Naive thymus-derived CD4-positive, alpha-beta T cell (primary cell): ENCODE measurements at regions of chr2 and their contacts with region 1.

Region 1: DNA sequence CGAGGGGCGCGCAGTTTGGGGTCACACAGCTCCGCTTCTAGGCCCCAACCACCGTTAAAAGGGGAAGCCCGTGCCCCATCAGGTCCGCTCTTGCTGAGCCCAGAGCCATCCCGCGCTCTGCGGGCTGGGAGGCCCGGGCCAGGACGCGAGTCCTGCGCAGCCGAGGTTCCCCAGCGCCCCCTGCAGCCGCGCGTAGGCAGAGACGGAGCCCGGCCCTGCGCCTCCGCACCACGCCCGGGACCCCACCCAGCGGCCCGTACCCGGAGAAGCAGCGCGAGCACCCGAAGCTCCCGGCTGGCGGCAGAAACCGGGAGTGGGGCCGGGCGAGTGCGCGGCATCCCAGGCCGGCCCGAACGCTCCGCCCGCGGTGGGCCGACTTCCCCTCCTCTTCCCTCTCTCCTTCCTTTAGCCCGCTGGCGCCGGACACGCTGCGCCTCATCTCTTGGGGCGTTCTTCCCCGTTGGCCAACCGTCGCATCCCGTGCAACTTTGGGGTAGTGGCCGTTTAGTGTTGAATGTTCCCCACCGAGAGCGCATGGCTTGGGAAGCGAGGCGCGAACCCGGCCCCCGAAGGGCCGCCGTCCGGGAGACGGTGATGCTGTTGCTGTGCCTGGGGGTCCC is at the start of gene ITGA4:
- DNase-seq: peak; percentile 77 to 89 (median 83)
- ATAC-seq: peak; percentile 92
- H3K4me3 ChIP-seq: peak within 1 kb of the TSS; percentile 91
- H3K4me3 Mint-ChIP-seq: peak within 1 kb of the TSS; percentile 89 to 99 (median 95)
- H3K27ac ChIP-seq: peak within 1 kb of the TSS; percentile 82
- H3K27ac Mint-ChIP-seq: peak within 1 kb of the TSS; percentile 81 to 98 (median 95)
- H3K4me1 ChIP-seq: peaks cover 13 to 24% of the 10 kb centered on the region in 2 donors
- H3K4me1 Mint-ChIP-seq: peaks cover 34 to 65% (median 54%) of the 10 kb centered on the region in 7 donors
- H3K27me3 ChIP-seq: no peaks in the 10 kb centered on the region
- H3K27me3 Mint-ChIP-seq: no peaks in the 10 kb centered on the region
- total RNA-seq, gene ITGA4: 135 to 212 (median 159) TPM

Region 2: GRCh38 chr2:181077128-181077709 is 380.0 kb before region 1 on chr2:
- CTCF ChIA-PET with region 1: no interaction called
- POLR2A ChIA-PET with region 1: no interaction called
- intact Hi-C with region 1: loop called (anchors 1 kb)
- DNase-seq: peak in 7 of 9 donors; percentile 49 to 76 (median 64)
- ATAC-seq: peak; percentile 90
- H3K4me3 ChIP-seq: no peak overlapping the region
- H3K4me3 Mint-ChIP-seq: no peak overlapping the region
- H3K27ac ChIP-seq: no peak overlapping the region
- H3K27ac Mint-ChIP-seq: no peak overlapping the region
- H3K4me1 ChIP-seq: no peaks in the 10 kb centered on the region
- H3K4me1 Mint-ChIP-seq: peaks cover 0 to 11% (median 0%) of the 10 kb centered on the region in 7 donors
- H3K27me3 ChIP-seq: no peaks in the 10 kb centered on the region
- H3K27me3 Mint-ChIP-seq: peaks cover 0 to 14% (median 0%) of the 10 kb centered on the region in 5 donors

Region 3: GRCh38 chr2:181178823-181179412 is 278.3 kb before region 1 on chr2:
- CTCF ChIA-PET with region 1: no interaction called
- POLR2A ChIA-PET with region 1: interaction called, 3 read pairs
- intact Hi-C with region 1: loop called (anchors 1 to 2 kb)
- DNase-seq: peak in 6 of 9 donors; percentile 14 to 34 (median 30)
- ATAC-seq: peak; percentile 76
- H3K4me3 ChIP-seq: no peak overlapping the region
- H3K4me3 Mint-ChIP-seq: peak overlapping the region in 2 of 10 donors; percentile 19 to 25
- H3K27ac ChIP-seq: no peak overlapping the region
- H3K27ac Mint-ChIP-seq: peak overlapping the region in 8 of 9 donors; percentile 1 to 65 (median 44)
- H3K4me1 ChIP-seq: peaks cover 15 to 16% of the 10 kb centered on the region in 2 donors
- H3K4me1 Mint-ChIP-seq: peaks cover 7 to 58% (median 45%) of the 10 kb centered on the region in 7 donors
- H3K27me3 ChIP-seq: no peaks in the 10 kb centered on the region
- H3K27me3 Mint-ChIP-seq: no peaks in the 10 kb centered on the region

Region 4: DNA sequence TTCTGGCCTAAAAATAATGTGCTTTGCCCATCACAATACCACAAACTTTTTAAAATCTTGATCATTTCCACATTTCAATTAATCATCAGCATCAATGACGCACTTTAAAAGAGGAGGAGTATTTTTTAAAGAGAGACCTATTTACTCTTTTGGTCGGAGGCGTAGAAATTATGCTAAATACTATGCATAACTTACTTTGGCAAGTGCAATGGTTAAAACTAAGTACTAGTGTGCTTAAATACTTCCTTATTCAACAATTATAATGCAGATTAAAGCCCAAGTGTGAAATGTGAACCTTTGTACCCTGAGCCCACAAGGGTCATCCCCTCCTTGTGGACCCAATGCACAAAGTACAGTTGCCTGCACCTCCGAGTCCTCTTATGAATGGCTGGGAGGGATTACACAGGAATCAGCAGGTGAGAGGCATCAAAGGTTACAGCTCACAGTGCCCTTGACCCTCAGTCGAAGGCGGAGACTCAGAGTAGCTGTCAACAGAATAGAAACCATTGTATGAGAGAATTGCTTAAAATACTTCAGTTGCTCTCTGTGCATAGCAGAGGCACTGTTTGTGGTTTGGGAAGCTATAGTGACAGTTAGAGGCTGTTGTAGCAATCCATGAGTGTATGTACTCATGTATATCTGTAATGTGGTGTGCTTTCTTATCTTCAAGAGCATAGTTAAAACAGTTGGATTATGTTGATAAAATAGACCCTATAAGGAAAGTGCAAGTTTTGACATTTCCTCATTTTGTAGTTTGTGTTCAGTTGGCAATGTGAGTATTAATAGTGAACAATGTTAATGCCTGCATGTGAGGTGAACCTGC is 151.7 kb before region 1 on chr2:
- CTCF ChIA-PET with region 1: interaction called, 21 read pairs
- POLR2A ChIA-PET with region 1: interaction called, 69 read pairs
- intact Hi-C with region 1: loop called (anchors 1 kb)
- DNase-seq: peak in 5 of 9 donors; percentile 47 to 61 (median 54)
- ATAC-seq: peak; percentile 77
- H3K4me3 ChIP-seq: peak overlapping the region; percentile 14
- H3K4me3 Mint-ChIP-seq: peak overlapping the region; percentile 71 to 94 (median 82)
- H3K27ac ChIP-seq: peak overlapping the region; percentile 84
- H3K27ac Mint-ChIP-seq: peak overlapping the region; percentile 90 to 100 (median 95)
- H3K4me1 ChIP-seq: peaks cover 66 to 73% of the 10 kb centered on the region in 2 donors
- H3K4me1 Mint-ChIP-seq: peaks cover 49 to 90% (median 84%) of the 10 kb centered on the region in 7 donors
- H3K27me3 ChIP-seq: no peaks in the 10 kb centered on the region
- H3K27me3 Mint-ChIP-seq: no peaks in the 10 kb centered on the region

Region 5: DNA sequence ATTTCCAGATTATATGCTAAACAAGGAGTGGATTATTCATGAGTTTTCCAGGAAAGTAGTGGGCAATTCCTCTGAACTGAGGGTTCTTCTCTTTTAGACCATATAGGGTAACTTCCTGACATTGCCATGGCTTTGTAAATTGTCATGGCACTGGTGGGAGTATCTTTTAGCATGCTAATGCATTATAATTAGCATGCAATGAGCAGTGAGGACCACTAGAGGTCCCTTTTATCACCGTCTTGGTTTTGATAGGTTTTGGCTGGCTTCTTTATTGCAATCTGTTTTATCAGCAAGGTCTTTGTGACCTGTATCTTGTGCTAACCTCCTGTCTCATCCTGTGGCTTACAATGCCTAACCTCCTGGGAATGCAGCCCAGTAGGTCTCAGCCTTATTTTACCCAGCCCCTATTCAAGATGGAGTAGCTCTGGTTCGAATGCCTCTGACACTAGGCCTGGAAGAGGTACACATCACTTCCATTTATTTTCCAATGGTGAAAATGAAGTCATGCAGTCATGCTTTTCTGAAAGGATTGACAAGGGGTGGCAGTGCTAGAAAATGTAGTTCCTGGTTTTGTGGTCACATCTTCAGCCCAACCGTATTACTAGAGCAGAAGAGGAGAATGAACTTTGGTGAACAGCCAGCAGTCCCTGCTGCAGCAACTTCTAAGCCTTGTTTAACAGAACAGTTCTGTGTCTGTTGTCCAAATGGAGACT is 26.7 kb before region 1 on chr2:
- CTCF ChIA-PET with region 1: interaction called, 5 read pairs
- POLR2A ChIA-PET with region 1: interaction called, 3 read pairs
- intact Hi-C with region 1: loop called (anchors 1 to 2 kb)
- DNase-seq: peak in 6 of 9 donors; percentile 11 to 45 (median 29)
- ATAC-seq: peak; percentile 70
- H3K4me3 ChIP-seq: no peak overlapping the region
- H3K4me3 Mint-ChIP-seq: peak overlapping the region in 1 of 10 donors; percentile 15
- H3K27ac ChIP-seq: no peak overlapping the region
- H3K27ac Mint-ChIP-seq: peak overlapping the region in 6 of 9 donors; percentile 18 to 73 (median 50)
- H3K4me1 ChIP-seq: peaks cover 0 to 12% of the 10 kb centered on the region in 2 donors
- H3K4me1 Mint-ChIP-seq: peaks cover 5 to 20% (median 8%) of the 10 kb centered on the region in 7 donors
- H3K27me3 ChIP-seq: no peaks in the 10 kb centered on the region
- H3K27me3 Mint-ChIP-seq: no peaks in the 10 kb centered on the region

Region 6: DNA sequence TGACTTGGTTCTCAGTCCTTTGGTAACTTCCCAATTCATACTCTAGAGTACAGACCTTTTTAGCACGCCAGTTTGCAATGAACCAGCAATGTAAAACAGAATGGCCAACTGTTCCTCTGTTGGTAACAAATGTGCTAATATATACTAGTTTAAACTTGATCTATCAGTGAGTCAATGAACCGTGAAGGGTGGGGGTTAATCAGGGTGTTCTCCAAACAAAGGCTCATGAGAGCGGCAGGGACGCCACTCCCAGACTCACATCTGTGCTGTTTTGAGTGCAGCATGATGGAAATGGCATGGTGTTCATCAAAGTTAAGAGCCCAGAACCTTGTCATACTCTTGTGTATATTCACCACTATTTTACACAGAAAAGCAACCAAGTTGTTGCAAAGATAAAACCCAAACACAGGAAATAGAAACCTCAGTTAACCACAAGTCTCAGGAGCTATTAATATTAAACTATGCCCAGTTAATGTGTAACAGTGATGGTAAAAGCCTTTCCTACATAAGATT is 129.4 kb after region 1 on chr2:
- CTCF ChIA-PET with region 1: no interaction called
- POLR2A ChIA-PET with region 1: no interaction called
- intact Hi-C with region 1: no loop called
- DNase-seq: no peak
- ATAC-seq: no peak
- H3K4me3 ChIP-seq: no peak overlapping the region
- H3K4me3 Mint-ChIP-seq: no peak overlapping the region
- H3K27ac ChIP-seq: no peak overlapping the region
- H3K27ac Mint-ChIP-seq: peak overlapping the region in 1 of 9 donors; percentile 44
- H3K4me1 ChIP-seq: peaks cover 0 to 6% of the 10 kb centered on the region in 2 donors
- H3K4me1 Mint-ChIP-seq: peaks cover 9 to 17% (median 14%) of the 10 kb centered on the region in 7 donors
- H3K27me3 ChIP-seq: no peaks in the 10 kb centered on the region
- H3K27me3 Mint-ChIP-seq: peaks cover 4 to 34% (median 13%) of the 10 kb centered on the region in 5 donors

Region 7: GRCh38 chr2:181697571-181697970 is 240.3 kb after region 1 on chr2:
- CTCF ChIA-PET with region 1: no interaction called
- POLR2A ChIA-PET with region 1: no interaction called
- intact Hi-C with region 1: no loop called
- DNase-seq: no peak
- ATAC-seq: peak; percentile 38
- H3K4me3 ChIP-seq: no peak overlapping the region
- H3K4me3 Mint-ChIP-seq: no peak overlapping the region
- H3K27ac ChIP-seq: no peak overlapping the region
- H3K27ac Mint-ChIP-seq: no peak overlapping the region
- H3K4me1 ChIP-seq: no peaks in the 10 kb centered on the region
- H3K4me1 Mint-ChIP-seq: no peaks in the 10 kb centered on the region
- H3K27me3 ChIP-seq: no peaks in the 10 kb centered on the region
- H3K27me3 Mint-ChIP-seq: peaks cover 20 to 35% (median 24%) of the 10 kb centered on the region in 5 donors

Region 8: DNA sequence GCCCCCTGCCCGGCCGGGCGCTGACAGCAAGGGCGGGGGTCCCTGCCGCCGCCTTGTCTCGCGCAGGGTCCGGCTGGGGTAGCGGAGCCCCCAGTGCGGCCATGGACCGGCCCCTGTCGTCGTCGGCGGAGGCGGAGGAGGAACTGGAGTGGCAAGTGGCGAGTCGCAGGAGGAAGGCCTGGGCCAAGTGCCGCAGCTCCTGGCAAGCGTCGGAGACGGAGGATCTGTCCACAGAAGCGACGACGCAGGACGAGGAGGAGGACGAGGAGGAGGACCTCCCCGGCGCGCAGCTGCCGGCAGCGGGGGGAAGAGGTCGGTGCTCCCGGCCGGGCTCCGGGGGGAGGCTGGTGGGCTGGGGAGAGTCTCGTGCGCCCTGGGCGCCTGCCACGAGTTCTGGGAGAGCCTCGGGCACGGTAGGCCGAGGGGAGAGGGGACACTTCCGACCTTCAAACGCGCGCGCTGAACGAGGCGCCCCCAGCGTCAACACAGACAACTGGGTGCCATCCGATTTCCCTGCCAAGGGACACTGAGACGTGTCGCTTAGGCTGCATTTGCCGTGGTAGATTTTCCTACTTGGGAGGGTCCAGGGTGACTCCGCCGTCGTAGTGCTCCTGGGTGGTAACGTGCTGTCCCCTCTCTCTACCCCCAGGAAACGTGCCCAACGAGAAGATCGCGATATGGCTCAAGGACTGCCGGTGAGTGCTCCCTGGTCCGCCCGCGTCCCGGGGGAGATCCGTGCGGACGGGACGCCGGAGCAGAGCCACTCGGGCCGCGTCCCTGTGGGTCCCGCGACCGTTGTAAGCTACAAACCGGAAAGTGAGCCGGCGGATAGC is 435.0 kb after region 1 on chr2:
- CTCF ChIA-PET with region 1: no interaction called
- POLR2A ChIA-PET with region 1: interaction called, 3 read pairs
- intact Hi-C with region 1: loop called (anchors 2 to 5 kb)
- DNase-seq: peak; percentile 37 to 68 (median 65)
- ATAC-seq: peak; percentile 66
- H3K4me3 ChIP-seq: peak overlapping the region; percentile 85
- H3K4me3 Mint-ChIP-seq: peak overlapping the region; percentile 90 to 99 (median 97)
- H3K27ac ChIP-seq: peak overlapping the region; percentile 76
- H3K27ac Mint-ChIP-seq: peak overlapping the region; percentile 74 to 93 (median 89)
- H3K4me1 ChIP-seq: peaks cover 4 to 22% of the 10 kb centered on the region in 2 donors
- H3K4me1 Mint-ChIP-seq: peaks cover 25 to 49% (median 44%) of the 10 kb centered on the region in 7 donors
- H3K27me3 ChIP-seq: no peaks in the 10 kb centered on the region
- H3K27me3 Mint-ChIP-seq: peaks cover 11 to 35% (median 20%) of the 10 kb centered on the region in 5 donors